ENCODE measurements at regions of chr12 and their contacts with region 1.

Region 1: GRCh38 chr12:108511633-108512540 is 3.2 kb upstream of the FICD start:
- H3K4me3 ChIP-seq: no peak overlapping the region
- H3K27ac ChIP-seq: no peak overlapping the region
- H3K4me1 ChIP-seq: no peaks in the 10 kb centered on the region
- CTCF ChIP-seq: peak; percentile 64

Region 2: DNA sequence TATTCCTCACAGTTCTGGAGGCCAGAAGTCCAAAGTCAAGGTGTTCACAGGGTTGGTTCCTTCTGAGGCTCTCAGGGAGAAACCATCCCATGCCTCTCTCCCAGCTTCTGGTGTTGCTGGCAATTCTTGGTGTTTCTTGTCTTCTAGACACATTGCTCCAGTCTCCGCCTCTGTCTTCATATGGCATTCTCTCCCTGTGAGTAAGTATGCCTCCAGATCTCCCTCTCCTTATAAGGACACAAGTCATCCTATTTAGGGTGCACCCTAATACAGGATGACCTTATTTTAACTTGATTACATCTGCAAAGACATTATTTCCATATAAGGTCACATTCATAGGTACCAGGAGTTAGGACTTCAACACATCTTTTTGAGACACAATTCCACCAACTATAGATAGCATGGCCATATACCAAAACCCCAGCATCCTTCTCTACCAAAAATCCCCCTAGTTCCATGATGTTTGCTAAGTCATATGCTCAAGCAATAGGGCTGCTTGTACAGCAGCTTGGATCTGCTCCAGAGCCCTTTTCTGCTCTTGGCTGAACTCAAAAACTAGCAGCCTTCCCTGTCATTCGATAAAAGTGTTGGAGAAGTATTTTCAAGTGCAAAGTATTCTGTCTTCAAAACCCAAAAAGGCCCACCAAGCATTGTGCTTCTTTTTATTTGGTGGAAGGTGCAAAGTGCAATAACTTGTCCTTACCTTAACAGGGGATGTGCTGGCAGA is 93.6 kb before region 1 on chr12:
- CTCF ChIA-PET with region 1: no interaction called
- POLR2A ChIA-PET with region 1: no interaction called
- H3K4me3 ChIP-seq: no peak overlapping the region
- H3K27ac ChIP-seq: no peak overlapping the region
- H3K4me1 ChIP-seq: no peaks in the 10 kb centered on the region
- CTCF ChIP-seq: no peak

Region 3: GRCh38 chr12:108495054-108495453 is 16.8 kb before region 1 on chr12:
- CTCF ChIA-PET with region 1: interaction called, 10 read pairs
- POLR2A ChIA-PET with region 1: interaction called, 4 read pairs
- H3K4me3 ChIP-seq: no peak overlapping the region
- H3K27ac ChIP-seq: no peak overlapping the region
- H3K4me1 ChIP-seq: no peaks in the 10 kb centered on the region
- CTCF ChIP-seq: no peak

Region 4: GRCh38 chr12:108523365-108523764 is 11.5 kb after region 1 on chr12:
- CTCF ChIA-PET with region 1: interaction called, 11 read pairs
- POLR2A ChIA-PET with region 1: no interaction called
- H3K4me3 ChIP-seq: no peak overlapping the region
- H3K27ac ChIP-seq: no peak overlapping the region
- H3K4me1 ChIP-seq: no peaks in the 10 kb centered on the region
- CTCF ChIP-seq: no peak

Region 5: GRCh38 chr12:108589028-108589839 is 77.3 kb after region 1 on chr12:
- CTCF ChIA-PET with region 1: no interaction called
- POLR2A ChIA-PET with region 1: no interaction called
- H3K4me3 ChIP-seq: no peak overlapping the region
- H3K27ac ChIP-seq: no peak overlapping the region
- H3K4me1 ChIP-seq: no peaks in the 10 kb centered on the region
- CTCF ChIP-seq: no peak

Region 6: GRCh38 chr12:108980831-108981618 is 469.1 kb after region 1 on chr12:
- CTCF ChIA-PET with region 1: no interaction called
- POLR2A ChIA-PET with region 1: no interaction called
- H3K4me3 ChIP-seq: no peak overlapping the region
- H3K27ac ChIP-seq: no peak overlapping the region
- H3K4me1 ChIP-seq: no peaks in the 10 kb centered on the region
- CTCF ChIP-seq: no peak

Measured in HEK293 (cell line).